Activated naive CD4-positive, alpha-beta T cell treated with anti-CD3 and anti-CD28 coated beads for 36 hours (primary cell): ENCODE measurements at regions of chr17 and their contacts with region 1.

Region 1: GRCh38 chr17:47663912-47664625 is 14.3 kb downstream of the KPNB1 start:
- DNase-seq: peak; percentile 80
- H3K4me3 Mint-ChIP-seq: no peak overlapping the region
- H3K27ac Mint-ChIP-seq: peak overlapping the region; percentile 87
- H3K4me1 Mint-ChIP-seq: peaks cover 41% of the 10 kb centered on the region
- H3K27me3 Mint-ChIP-seq: no peaks in the 10 kb centered on the region

Region 2: GRCh38 chr17:47636273-47637030 is 27.6 kb before region 1 on chr17:
- CTCF ChIA-PET with region 1: no interaction called
- intact Hi-C with region 1: no loop called
- DNase-seq: no peak
- H3K4me3 Mint-ChIP-seq: no peak overlapping the region
- H3K27ac Mint-ChIP-seq: no peak overlapping the region
- H3K4me1 Mint-ChIP-seq: peaks cover 9% of the 10 kb centered on the region
- H3K27me3 Mint-ChIP-seq: no peaks in the 10 kb centered on the region

Region 3: DNA sequence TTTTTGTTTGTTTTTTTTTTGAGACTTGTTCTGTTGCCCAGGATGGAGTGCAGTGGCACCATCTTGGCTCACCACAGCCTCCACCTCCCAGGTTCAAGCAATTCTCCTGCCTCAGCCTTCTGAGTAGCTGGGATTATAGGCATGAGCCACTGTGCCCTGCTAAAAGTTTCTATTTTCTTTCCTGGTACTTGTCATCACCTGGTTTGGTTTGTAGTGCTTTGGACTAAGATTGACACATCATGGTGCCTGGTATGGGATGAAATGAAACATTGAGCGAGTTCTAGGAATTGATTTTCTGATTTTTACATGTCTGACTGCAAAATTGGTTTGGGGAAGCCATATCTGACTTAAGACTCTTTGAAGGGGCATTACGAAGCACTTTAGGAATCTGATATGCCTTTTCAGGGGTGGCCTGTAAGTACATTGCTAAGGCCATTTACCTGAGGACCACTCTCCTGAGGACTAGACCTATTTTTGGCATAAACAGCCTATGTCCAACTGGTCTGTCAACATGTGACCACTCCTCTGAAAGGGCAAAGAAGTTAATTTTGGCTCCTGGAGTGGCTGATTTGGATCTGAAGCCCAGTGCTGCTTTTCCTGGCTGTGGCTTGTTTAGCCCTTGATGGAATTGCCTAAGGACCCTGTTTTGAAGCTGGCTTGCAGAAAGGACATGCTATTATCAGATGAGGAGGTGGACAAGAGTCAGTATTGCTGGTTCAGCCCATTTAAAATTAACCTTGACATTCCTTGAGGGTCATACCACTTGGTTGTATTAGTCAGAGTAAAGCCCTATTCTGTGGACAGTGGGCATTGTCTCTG is 11.5 kb after region 1 on chr17:
- CTCF ChIA-PET with region 1: interaction called, 36 read pairs
- intact Hi-C with region 1: no loop called
- DNase-seq: no peak
- H3K4me3 Mint-ChIP-seq: no peak overlapping the region
- H3K27ac Mint-ChIP-seq: peak overlapping the region; percentile 63
- H3K4me1 Mint-ChIP-seq: peaks cover 25% of the 10 kb centered on the region
- H3K27me3 Mint-ChIP-seq: no peaks in the 10 kb centered on the region

Region 4: GRCh38 chr17:47698749-47699535 is 34.9 kb after region 1 on chr17:
- CTCF ChIA-PET with region 1: interaction called, 7 read pairs
- intact Hi-C with region 1: loop called (anchors 2 kb)
- DNase-seq: peak; percentile 92
- H3K4me3 Mint-ChIP-seq: peak overlapping the region; percentile 28
- H3K27ac Mint-ChIP-seq: peak overlapping the region; percentile 64
- H3K4me1 Mint-ChIP-seq: peaks cover 79% of the 10 kb centered on the region
- H3K27me3 Mint-ChIP-seq: no peaks in the 10 kb centered on the region

Region 5: DNA sequence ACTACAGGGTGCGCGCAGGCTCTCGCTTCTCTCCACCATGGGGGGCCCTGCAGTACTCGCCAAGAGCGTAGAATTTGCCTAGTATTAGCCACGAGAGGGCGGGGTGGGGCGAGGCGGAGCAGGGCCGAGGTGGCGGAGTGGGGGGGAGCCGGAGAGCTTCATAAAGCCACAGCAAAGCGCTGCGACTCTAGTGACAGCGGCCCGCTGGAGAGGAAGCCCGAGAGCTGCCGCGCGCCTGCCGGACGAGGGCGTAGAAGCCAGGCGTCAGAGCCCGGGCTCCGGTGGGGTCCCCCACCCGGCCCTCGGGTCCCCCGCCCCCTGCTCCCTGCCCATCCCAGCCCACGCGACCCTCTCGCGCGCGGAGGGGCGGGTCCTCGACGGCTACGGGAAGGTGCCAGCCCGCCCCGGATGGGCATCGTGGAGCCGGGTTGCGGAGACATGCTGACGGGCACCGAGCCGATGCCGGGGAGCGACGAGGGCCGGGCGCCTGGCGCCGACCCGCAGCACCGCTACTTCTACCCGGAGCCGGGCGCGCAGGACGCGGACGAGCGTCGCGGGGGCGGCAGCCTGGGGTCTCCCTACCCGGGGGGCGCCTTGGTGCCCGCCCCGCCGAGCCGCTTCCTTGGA is 69.1 kb after region 1 on chr17 and contains the start of gene TBX21:
- CTCF ChIA-PET with region 1: interaction called, 11 read pairs
- intact Hi-C with region 1: loop called (anchors 2 kb)
- DNase-seq: peak; percentile 92
- H3K4me3 Mint-ChIP-seq: peak within 1 kb of the TSS; percentile 100
- H3K27ac Mint-ChIP-seq: peak within 1 kb of the TSS; percentile 99
- H3K4me1 Mint-ChIP-seq: peaks cover 70% of the 10 kb centered on the region
- H3K27me3 Mint-ChIP-seq: no peaks in the 10 kb centered on the region
- total RNA-seq, gene TBX21: 50.6 to 52.3 TPM

Region 6: DNA sequence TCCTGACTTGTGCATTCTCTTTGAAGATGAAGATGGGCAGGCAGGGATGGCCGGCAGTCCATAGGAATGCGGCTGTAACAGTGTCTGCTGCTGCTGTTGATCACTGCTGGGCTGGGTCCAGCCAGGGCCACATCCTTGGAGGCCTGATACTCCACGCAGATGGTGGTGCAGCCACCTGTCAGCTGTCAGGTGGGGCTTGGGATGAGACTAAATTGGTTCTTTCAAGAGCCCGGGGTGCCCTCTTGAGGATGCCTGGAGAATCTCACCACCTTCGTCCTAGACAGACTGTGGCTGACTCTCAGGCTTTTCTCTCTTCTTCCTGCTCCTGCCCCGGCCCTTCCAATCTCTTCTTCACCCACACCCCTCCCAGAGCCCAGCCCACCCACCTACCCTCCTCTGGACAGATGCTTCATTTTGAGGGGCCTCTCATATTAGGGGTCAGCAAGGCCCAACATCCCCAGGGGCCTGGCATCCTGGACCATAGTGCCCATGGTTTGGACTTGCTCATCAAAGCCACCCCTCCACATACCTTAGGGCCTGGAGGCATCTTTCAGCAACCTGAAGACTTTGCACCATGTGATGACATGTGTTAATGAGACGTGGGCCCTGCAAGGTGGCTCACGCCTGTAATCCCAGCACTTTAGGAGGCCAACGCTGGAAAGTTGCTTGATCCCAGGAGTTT is 138.4 kb after region 1 on chr17:
- CTCF ChIA-PET with region 1: interaction called, 3 read pairs
- intact Hi-C with region 1: loop called (anchors 1 kb)
- DNase-seq: peak; percentile 73
- H3K4me3 Mint-ChIP-seq: no peak overlapping the region
- H3K27ac Mint-ChIP-seq: no peak overlapping the region
- H3K4me1 Mint-ChIP-seq: no peaks in the 10 kb centered on the region
- H3K27me3 Mint-ChIP-seq: no peaks in the 10 kb centered on the region